ENCODE measurements at regions of chr18 and their contacts with region 1.

Region 1: DNA sequence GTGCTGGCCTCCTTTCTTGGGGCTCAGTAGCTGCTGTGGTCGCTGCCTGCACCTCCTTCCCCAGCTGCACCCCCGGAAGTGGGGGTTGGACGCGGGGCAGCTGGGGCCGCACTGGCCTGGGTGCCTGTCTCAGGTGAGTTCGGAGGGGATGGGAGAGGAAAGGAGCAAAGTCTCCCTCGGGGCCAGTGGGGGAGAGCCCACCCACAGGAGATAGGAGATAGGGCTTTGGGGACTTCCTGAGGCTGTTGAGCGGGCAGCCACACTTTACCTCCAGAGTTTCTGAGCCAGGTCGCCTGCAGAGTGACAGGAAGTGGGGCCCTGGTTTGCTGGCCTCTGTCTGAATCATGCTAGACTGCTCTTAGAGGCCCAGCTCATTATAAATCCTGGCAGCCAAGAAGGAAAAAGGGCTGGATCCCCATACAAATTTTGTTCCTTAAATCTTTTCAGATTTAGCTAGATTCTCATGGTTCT is 8.1 kb downstream of the MBP start:
- DNase-seq: peak; percentile 51
- ATAC-seq: peak; percentile 38
- H3K4me3 ChIP-seq: peak overlapping the region in 3 of 5 experiments; percentile 5 to 45 (median 14)
- H3K4me3 Mint-ChIP-seq: peak overlapping the region; percentile 72
- H3K27ac ChIP-seq: peak overlapping the region; percentile 60 to 80
- H3K27ac Mint-ChIP-seq: peak overlapping the region; percentile 62
- H3K4me1 ChIP-seq: peaks cover 64 to 66% of the 10 kb centered on the region in 2 donors
- H3K4me1 Mint-ChIP-seq: peaks cover 91% of the 10 kb centered on the region
- H3K27me3 ChIP-seq: no peaks in the 10 kb centered on the region
- H3K27me3 Mint-ChIP-seq: no peaks in the 10 kb centered on the region
- CTCF ChIP-seq: no peak

Region 2: DNA sequence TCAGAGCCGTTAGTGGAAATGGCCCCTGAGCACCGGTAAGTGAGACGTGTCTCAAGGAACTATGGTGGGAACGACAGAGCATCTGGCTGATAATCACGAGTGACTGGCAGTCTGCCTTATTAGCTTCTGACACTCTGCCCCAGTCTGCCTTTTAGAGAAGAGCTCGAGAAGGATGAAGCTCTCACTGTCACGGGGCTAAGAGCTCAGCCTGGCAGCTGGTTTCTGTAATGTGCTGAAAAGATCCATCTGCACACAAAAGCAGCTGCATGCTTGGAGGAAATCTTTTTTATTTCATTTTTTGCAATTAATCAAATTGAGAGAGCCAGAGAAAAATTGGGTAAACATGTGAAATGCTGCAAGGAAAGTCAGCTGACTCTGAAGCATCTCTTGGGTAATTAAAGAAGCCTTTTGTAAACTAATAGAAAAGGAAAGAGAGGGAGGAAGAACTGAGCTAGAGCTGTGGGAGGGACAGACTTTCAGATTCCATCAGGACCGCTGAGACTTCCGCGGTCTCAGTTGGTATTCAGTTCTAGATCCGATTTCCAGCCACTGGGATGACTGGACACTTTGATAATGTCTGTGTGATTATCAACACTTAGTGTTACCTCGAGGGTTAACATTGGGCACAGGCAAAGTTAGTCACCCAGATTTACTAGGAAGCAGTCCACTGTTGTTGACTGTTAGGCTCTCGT is 16.3 kb before region 1 on chr18:
- CTCF ChIA-PET with region 1: interaction called, 12 read pairs
- POLR2A ChIA-PET with region 1: interaction called, 4 read pairs
- intact Hi-C with region 1: loop called (anchors 2 kb)
- DNase-seq: peak; percentile 59
- ATAC-seq: peak; percentile 48
- H3K4me3 ChIP-seq: no peak overlapping the region
- H3K4me3 Mint-ChIP-seq: peak overlapping the region; percentile 71
- H3K27ac ChIP-seq: peak overlapping the region; percentile 21 to 70
- H3K27ac Mint-ChIP-seq: peak overlapping the region; percentile 26
- H3K4me1 ChIP-seq: peaks cover 41 to 47% of the 10 kb centered on the region in 2 donors
- H3K4me1 Mint-ChIP-seq: peaks cover 66% of the 10 kb centered on the region
- H3K27me3 ChIP-seq: no peaks in the 10 kb centered on the region
- H3K27me3 Mint-ChIP-seq: no peaks in the 10 kb centered on the region
- CTCF ChIP-seq: no peak